ENCODE measurements at regions of chr11 and their contacts with region 1.

Region 1: DNA sequence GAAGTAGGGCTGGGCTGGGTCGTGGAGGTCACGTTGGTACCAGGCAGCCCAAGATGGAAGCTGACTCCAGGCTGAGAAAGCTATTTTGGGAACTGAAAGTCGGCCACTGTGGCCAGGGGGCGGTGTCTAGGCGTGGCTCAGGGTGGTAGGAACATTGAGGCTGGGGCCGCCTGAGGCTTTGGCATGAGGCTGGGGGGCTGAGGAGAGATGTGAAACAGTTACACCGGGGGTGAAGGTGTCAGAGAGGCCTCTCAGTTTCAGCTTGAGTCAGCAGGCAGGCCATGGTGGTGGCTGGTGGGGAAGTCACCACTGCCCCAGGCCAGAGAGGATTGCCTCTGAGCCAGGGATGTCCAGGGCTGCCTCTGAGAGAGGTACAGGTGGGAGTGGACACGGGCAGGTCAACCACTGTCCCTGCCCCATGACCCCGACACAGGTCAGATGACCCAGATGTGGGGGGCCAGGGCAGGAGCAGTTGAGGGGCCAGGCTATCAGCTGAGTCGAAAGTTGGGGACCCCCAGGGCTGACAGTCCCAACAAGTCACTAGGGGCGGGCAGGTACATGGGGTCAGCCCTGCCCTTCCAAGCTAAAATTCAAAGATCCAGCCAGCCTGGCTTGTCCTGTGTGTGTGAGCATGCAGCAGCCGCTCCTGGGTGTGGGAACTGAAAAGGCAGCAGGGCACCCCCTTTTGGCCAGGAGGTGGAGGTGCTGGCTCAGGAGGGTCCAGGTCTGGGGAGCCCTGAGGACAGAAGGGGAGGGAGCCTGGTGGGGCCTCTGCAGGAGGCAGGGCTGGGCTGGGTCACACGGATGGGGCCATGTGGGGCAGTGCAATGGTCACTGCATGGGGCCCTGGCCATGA is 7.2 kb downstream of the KCNK7 start:
- DNase-seq: peak; percentile 82
- H3K4me3 Mint-ChIP-seq: peak overlapping the region; percentile 26
- H3K27ac Mint-ChIP-seq: peak overlapping the region; percentile 86
- H3K4me1 Mint-ChIP-seq: peaks cover 40% of the 10 kb centered on the region
- H3K27me3 Mint-ChIP-seq: no peaks in the 10 kb centered on the region

Region 2: GRCh38 chr11:65575568-65576231 is 12.7 kb before region 1 on chr11 and contains the start of gene EHBP1L1:
- CTCF ChIA-PET with region 1: interaction called, 40 read pairs
- POLR2A ChIA-PET with region 1: interaction called, 3 read pairs
- DNase-seq: peak; percentile 77
- H3K4me3 Mint-ChIP-seq: peak within 1 kb of the TSS; percentile 85
- H3K27ac Mint-ChIP-seq: peak within 1 kb of the TSS; percentile 93
- H3K4me1 Mint-ChIP-seq: peaks cover 46% of the 10 kb centered on the region
- H3K27me3 Mint-ChIP-seq: no peaks in the 10 kb centered on the region
- total RNA-seq, gene EHBP1L1: 69.2 to 96.7 TPM

Region 3: GRCh38 chr11:65663639-65664200 is 75.3 kb after region 1 on chr11:
- CTCF ChIA-PET with region 1: no interaction called
- POLR2A ChIA-PET with region 1: no interaction called
- DNase-seq: peak; percentile 50
- H3K4me3 Mint-ChIP-seq: peak overlapping the region; percentile 83
- H3K27ac Mint-ChIP-seq: peak overlapping the region; percentile 91
- H3K4me1 Mint-ChIP-seq: peaks cover 38% of the 10 kb centered on the region
- H3K27me3 Mint-ChIP-seq: no peaks in the 10 kb centered on the region